Caco-2 (cell line): ENCODE measurements at regions of chr19 and their contacts with region 1.

Region 1: GRCh38 chr19:54448774-54449700 is at the start of gene LENG8:
- DNase-seq: peak; percentile 97
- H3K4me3 ChIP-seq: peak within 1 kb of the TSS; percentile 71
- H3K4me3 Mint-ChIP-seq: peak within 1 kb of the TSS; percentile 92
- H3K27ac Mint-ChIP-seq: peak within 1 kb of the TSS; percentile 94
- H3K4me1 ChIP-seq: peaks cover 27% of the 10 kb centered on the region
- H3K4me1 Mint-ChIP-seq: peaks cover 13% of the 10 kb centered on the region
- H3K27me3 ChIP-seq: no peaks in the 10 kb centered on the region
- H3K27me3 Mint-ChIP-seq: no peaks in the 10 kb centered on the region
- CTCF ChIP-seq: no peak
- total RNA-seq, gene LENG8: 143 and 148 TPM in 2 replicates

Region 2: GRCh38 chr19:54430306-54431254 is 18.5 kb before region 1 on chr19:
- CTCF ChIA-PET with region 1: no interaction called
- POLR2A ChIA-PET with region 1: interaction called, 14 read pairs
- intact Hi-C with region 1: no loop called
- DNase-seq: peak; percentile 71 to 77
- H3K4me3 ChIP-seq: peak overlapping the region; percentile 34
- H3K4me3 Mint-ChIP-seq: peak overlapping the region; percentile 60
- H3K27ac Mint-ChIP-seq: no peak overlapping the region
- H3K4me1 ChIP-seq: no peaks in the 10 kb centered on the region; the same call in 1 of the 2 replicates
- H3K4me1 Mint-ChIP-seq: peaks cover 9% of the 10 kb centered on the region
- H3K27me3 ChIP-seq: no peaks in the 10 kb centered on the region
- H3K27me3 Mint-ChIP-seq: peaks cover 9% of the 10 kb centered on the region
- CTCF ChIP-seq: peak; percentile 17 to 42

Region 3: GRCh38 chr19:54463531-54464043 is 14.6 kb after region 1 on chr19 and contains the start of gene LENG9:
- CTCF ChIA-PET with region 1: interaction called, 12 read pairs
- POLR2A ChIA-PET with region 1: interaction called, 48 read pairs
- intact Hi-C with region 1: loop called (anchors 1 kb)
- DNase-seq: peak; percentile 99 to 100
- H3K4me3 ChIP-seq: peak within 1 kb of the TSS; percentile 81
- H3K4me3 Mint-ChIP-seq: peak within 1 kb of the TSS; percentile 92
- H3K27ac Mint-ChIP-seq: peak within 1 kb of the TSS; percentile 99
- H3K4me1 ChIP-seq: peaks cover 15% of the 10 kb centered on the region
- H3K4me1 Mint-ChIP-seq: peaks cover 25% of the 10 kb centered on the region
- H3K27me3 ChIP-seq: no peaks in the 10 kb centered on the region
- H3K27me3 Mint-ChIP-seq: no peaks in the 10 kb centered on the region
- CTCF ChIP-seq: no peak
- total RNA-seq, gene LENG9: 6.7 and 6.9 TPM in 2 replicates

Region 4: DNA sequence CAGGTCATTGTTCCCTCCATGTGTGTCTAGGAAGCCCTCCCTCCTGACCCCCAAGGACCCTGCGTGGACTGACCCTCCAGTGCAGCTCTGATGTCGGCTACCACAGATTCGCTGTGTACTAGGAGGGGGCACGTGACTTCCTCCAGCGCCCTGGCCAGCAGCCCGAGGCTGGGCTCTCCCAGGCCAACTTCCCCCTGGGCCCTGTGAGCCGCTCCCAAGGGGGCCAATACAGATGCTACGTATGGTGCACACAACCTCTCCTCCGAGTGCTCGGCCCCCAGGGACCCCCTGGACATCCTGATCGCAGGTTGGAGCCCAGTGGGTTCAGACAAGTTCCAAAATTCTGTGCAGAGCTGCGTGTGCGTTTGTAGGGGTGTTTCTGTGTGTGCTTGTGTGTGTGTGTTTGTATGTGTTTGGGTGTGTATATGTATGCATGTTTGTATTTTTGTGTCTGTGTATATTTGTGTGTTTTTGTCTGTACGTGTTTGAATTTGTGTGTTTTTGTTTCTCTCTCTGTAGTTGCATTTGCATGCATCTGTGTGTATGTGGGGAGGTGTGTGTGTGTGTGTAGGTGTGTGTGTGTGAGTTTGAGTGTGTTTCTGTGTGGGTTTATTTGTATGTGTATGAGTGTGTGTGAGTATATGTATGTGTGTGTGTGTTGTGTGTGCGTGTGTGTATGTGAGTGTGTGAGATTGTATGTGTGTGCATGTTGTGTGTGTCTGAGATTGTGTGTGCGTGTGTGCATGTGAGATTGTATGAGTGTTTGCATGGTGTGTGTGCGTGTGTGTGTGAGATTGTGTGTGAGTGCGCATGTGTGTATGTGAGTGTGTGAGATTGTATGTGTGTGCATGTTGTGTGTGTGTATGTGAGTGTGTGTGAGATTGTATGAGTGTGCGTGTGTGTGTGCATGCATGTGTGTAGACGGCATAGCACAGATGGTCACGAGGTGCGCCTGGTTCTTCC is 103.2 kb after region 1 on chr19:
- CTCF ChIA-PET with region 1: no interaction called
- POLR2A ChIA-PET with region 1: no interaction called
- intact Hi-C with region 1: no loop called
- DNase-seq: no peak
- H3K4me3 ChIP-seq: no peak overlapping the region
- H3K4me3 Mint-ChIP-seq: no peak overlapping the region
- H3K27ac Mint-ChIP-seq: no peak overlapping the region
- H3K4me1 ChIP-seq: no peaks in the 10 kb centered on the region
- H3K4me1 Mint-ChIP-seq: no peaks in the 10 kb centered on the region
- H3K27me3 ChIP-seq: no peaks in the 10 kb centered on the region
- H3K27me3 Mint-ChIP-seq: peaks cover 2% of the 10 kb centered on the region
- CTCF ChIP-seq: no peak